ENCODE measurements at regions of chr20 and their contacts with region 1.

Region 1: DNA sequence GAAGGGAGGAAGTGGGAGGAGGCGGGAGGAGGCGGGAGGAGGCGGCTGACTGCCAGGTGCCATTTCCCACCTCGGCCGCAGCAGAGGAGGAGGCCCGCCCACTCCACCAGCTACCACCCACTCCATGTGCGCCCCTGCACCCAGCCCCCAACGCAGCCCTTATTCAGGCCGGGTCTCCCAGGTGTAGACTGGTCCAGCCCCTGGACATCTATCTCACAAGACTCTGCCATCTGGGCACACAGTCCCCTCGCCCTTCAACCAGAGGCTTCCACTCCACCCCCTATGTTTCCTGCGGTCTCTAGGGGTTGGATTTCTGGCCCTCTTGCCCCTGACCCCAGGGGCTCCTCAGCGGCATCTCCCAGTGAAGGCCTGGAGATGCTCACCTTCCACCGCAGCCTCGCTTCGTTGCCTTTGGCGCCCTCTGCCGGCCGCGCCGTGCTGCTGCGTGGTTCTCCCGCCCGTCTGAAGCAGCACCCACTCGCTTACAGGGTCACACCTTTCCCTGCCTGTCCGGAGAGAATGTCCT is 32.6 kb upstream of the FAM83D start:
- DNase-seq: peak; percentile 44 to 76
- ATAC-seq: peak; percentile 55 to 78 (median 69)
- H3K4me3 ChIP-seq: no peak overlapping the region
- H3K27ac ChIP-seq: no peak overlapping the region
- H3K4me1 ChIP-seq: no peaks in the 10 kb centered on the region
- H3K27me3 ChIP-seq: peaks cover 0 to 20% (median 1%) of the 10 kb centered on the region in 3 donors
- CTCF ChIP-seq: peak; percentile 73

Region 2: DNA sequence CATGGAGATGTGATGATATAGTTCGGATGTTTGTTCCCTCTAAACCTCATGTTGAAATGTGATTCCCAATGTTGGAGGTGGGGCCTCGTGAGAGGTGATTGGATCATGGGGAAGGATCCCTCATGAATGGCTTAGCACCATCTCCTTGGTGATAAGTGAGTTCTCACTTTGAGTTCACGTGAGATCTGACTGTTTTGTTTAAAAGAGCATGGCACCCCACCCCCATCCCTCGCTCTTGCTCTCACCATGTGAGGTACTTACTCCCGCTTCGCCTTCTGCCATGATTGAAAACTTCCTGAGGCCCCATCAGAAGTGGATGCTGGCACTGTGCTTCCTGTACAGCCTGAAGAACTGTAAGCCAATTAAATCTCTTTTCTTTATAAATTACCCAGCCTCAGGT is 158.5 kb before region 1 on chr20:
- intact Hi-C with region 1: no loop called
- DNase-seq: no peak
- ATAC-seq: no peak
- H3K4me3 ChIP-seq: no peak overlapping the region
- H3K27ac ChIP-seq: no peak overlapping the region
- H3K4me1 ChIP-seq: peaks cover 5% of the 10 kb centered on the region
- H3K27me3 ChIP-seq: peaks cover 3 to 74% (median 9%) of the 10 kb centered on the region in 3 donors
- CTCF ChIP-seq: no peak

Region 3: GRCh38 chr20:38805502-38805957 is 88.1 kb before region 1 on chr20 and contains the start of gene PPP1R16B:
- intact Hi-C with region 1: loop called in 1 of 2 experiments (anchors 10 kb)
- DNase-seq: peak; percentile 33 to 59
- ATAC-seq: peak in 3 of 4 donors; percentile 44 to 74 (median 50)
- H3K4me3 ChIP-seq: peak within 1 kb of the TSS; percentile 69
- H3K27ac ChIP-seq: peak within 1 kb of the TSS; percentile 46
- H3K4me1 ChIP-seq: peaks cover 4% of the 10 kb centered on the region
- H3K27me3 ChIP-seq: peaks cover 0 to 40% (median 13%) of the 10 kb centered on the region in 3 donors
- CTCF ChIP-seq: no peak
- total RNA-seq, gene PPP1R16B: 2.9 to 5.2 (median 5.1) TPM